ENCODE measurements at regions of chr6 and their contacts with region 1.

Region 1: DNA sequence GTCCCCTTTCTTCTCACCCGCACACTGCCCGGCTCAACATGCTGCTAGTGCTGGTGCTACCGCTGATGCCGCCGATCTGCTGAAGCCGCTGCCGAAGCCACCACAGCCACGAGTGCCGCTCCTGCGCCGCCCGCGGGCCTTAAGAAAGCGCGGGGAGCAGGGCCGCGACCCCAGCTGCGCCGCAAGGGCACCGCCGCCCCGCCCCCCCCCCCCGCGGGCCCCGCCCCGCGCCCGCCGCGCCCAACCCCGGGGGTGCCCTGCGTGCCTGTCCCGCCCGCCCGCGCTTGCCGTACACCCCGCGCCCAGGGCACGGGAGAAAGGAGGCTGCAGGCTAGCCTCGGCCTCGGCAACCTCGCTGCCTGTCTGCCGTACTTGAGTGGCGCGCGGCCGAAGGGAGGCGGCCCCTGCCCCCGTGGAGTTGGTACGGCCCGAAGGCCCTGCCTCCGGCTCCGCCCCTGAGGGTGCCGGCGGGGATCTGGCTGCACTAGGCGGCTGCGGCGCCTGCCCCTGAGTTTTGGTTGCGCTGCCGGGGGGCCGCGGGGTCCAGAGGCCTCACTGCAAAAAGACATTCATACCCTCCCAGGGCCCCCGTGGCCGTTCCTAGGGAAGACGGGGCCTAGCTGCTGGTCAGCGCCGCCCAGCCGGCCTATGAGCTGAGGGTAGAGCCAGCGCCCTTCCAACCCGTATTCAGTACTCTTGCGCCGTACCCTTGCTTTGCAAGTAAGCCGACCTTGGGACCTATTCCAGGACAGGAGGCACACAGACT is at the start of gene SOD2:
- DNase-seq: peak; percentile 90
- ATAC-seq: peak; percentile 75
- H3K4me3 Mint-ChIP-seq: peak within 1 kb of the TSS; percentile 92
- H3K27ac Mint-ChIP-seq: peak within 1 kb of the TSS; percentile 93
- H3K4me1 Mint-ChIP-seq: peaks cover 44% of the 10 kb centered on the region
- H3K27me3 Mint-ChIP-seq: no peaks in the 10 kb centered on the region
- total RNA-seq, gene SOD2: 90.6 to 105 TPM

Region 2: GRCh38 chr6:158853072-158853871 is 840.0 kb before region 1 on chr6:
- CTCF ChIA-PET with region 1: no interaction called
- POLR2A ChIA-PET with region 1: no interaction called
- intact Hi-C with region 1: loop called in 1 of 2 experiments (anchors 10 kb)
- DNase-seq: peak; percentile 94
- ATAC-seq: peak; percentile 83
- H3K4me3 Mint-ChIP-seq: no peak overlapping the region
- H3K27ac Mint-ChIP-seq: no peak overlapping the region
- H3K4me1 Mint-ChIP-seq: peaks cover 29% of the 10 kb centered on the region
- H3K27me3 Mint-ChIP-seq: no peaks in the 10 kb centered on the region

Region 3: GRCh38 chr6:158910484-158911348 is 782.6 kb before region 1 on chr6:
- CTCF ChIA-PET with region 1: no interaction called
- POLR2A ChIA-PET with region 1: no interaction called
- intact Hi-C with region 1: no loop called
- DNase-seq: peak; percentile 16
- ATAC-seq: peak; percentile 40
- H3K4me3 Mint-ChIP-seq: peak overlapping the region; percentile 25
- H3K27ac Mint-ChIP-seq: peak overlapping the region; percentile 43
- H3K4me1 Mint-ChIP-seq: peaks cover 29% of the 10 kb centered on the region
- H3K27me3 Mint-ChIP-seq: no peaks in the 10 kb centered on the region

Region 4: GRCh38 chr6:159473475-159474263 is 219.6 kb before region 1 on chr6:
- CTCF ChIA-PET with region 1: no interaction called
- POLR2A ChIA-PET with region 1: no interaction called
- intact Hi-C with region 1: no loop called
- DNase-seq: no peak
- ATAC-seq: no peak
- H3K4me3 Mint-ChIP-seq: no peak overlapping the region
- H3K27ac Mint-ChIP-seq: no peak overlapping the region
- H3K4me1 Mint-ChIP-seq: no peaks in the 10 kb centered on the region
- H3K27me3 Mint-ChIP-seq: peaks cover 6% of the 10 kb centered on the region

Region 5: DNA sequence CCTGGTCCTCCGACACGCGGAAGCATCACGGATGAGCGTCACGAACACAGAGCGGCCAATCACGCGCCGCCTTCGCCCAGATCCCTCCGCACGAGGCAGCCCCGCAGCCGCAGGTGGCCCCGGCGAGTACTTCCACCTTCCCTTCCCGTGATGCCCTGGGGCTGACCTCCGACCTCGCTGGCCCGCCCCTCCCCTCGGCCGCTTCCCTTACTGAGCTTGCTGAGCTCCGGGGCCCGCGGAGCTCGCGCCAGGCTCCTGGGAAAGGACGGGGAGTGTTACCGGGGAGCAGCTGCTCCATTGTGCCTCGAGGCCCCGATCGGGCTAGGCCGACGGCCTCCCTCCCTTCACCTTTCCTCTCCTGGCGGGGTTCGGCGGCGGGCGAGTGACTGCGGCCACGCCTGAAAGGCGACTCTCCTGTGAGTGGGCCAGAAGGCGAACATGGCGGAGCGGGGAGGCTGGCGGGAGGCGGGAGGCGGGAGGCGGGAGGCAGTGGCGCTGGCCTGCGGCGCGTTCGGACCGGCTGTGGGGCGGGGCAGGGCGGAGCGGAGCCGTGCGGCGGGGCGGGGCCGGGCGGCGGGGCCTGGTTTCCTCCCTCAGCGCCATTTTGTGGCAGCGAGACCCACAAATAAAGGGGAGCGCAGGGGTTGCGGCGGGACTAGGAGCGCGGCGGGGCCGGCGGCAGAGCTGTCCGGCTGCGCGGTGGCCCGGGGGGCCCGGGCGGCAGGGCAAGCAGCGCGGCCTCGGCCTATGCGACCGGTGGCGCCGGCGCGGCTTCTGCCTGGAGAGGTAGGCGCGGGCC is 33.8 kb after region 1 on chr6 and contains the start of gene WTAP:
- CTCF ChIA-PET with region 1: interaction called, 23 read pairs
- POLR2A ChIA-PET with region 1: interaction called, 23 read pairs
- intact Hi-C with region 1: loop called (anchors 1 kb)
- DNase-seq: peak; percentile 99
- ATAC-seq: peak; percentile 91
- H3K4me3 Mint-ChIP-seq: peak within 1 kb of the TSS; percentile 95
- H3K27ac Mint-ChIP-seq: peak within 1 kb of the TSS; percentile 98
- H3K4me1 Mint-ChIP-seq: peaks cover 47% of the 10 kb centered on the region
- H3K27me3 Mint-ChIP-seq: no peaks in the 10 kb centered on the region
- total RNA-seq, gene WTAP: 87.2 to 91.5 TPM

Region 6: GRCh38 chr6:159789377-159790148 is 96.3 kb after region 1 on chr6 and contains the start of gene TCP1:
- CTCF ChIA-PET with region 1: interaction called, 13 read pairs
- POLR2A ChIA-PET with region 1: interaction called, 15 read pairs
- intact Hi-C with region 1: loop called (anchors 1 to 2 kb)
- DNase-seq: peak; percentile 100
- ATAC-seq: peak; percentile 89
- H3K4me3 Mint-ChIP-seq: peak within 1 kb of the TSS; percentile 86
- H3K27ac Mint-ChIP-seq: peak within 1 kb of the TSS; percentile 99
- H3K4me1 Mint-ChIP-seq: peaks cover 62% of the 10 kb centered on the region
- H3K27me3 Mint-ChIP-seq: no peaks in the 10 kb centered on the region
- total RNA-seq, gene TCP1: 358 to 496 TPM

Region 7: GRCh38 chr6:159968440-159969203 is 275.3 kb after region 1 on chr6 and contains the start of gene IGF2R:
- CTCF ChIA-PET with region 1: interaction called, 6 read pairs
- POLR2A ChIA-PET with region 1: no interaction called
- intact Hi-C with region 1: loop called (anchors 1 to 5 kb)
- DNase-seq: peak; percentile 97
- ATAC-seq: peak; percentile 91
- H3K4me3 Mint-ChIP-seq: peak within 1 kb of the TSS; percentile 93
- H3K27ac Mint-ChIP-seq: peak within 1 kb of the TSS; percentile 92
- H3K4me1 Mint-ChIP-seq: peaks cover 38% of the 10 kb centered on the region
- H3K27me3 Mint-ChIP-seq: no peaks in the 10 kb centered on the region
- total RNA-seq, gene IGF2R: 55.6 to 65.6 TPM

Region 8: GRCh38 chr6:160221423-160221822 is 528.1 kb after region 1 on chr6:
- CTCF ChIA-PET with region 1: no interaction called
- POLR2A ChIA-PET with region 1: no interaction called
- intact Hi-C with region 1: loop called in 1 of 2 experiments (anchors 10 kb)
- DNase-seq: no peak
- ATAC-seq: peak; percentile 30
- H3K4me3 Mint-ChIP-seq: no peak overlapping the region
- H3K27ac Mint-ChIP-seq: no peak overlapping the region
- H3K4me1 Mint-ChIP-seq: peaks cover 10% of the 10 kb centered on the region
- H3K27me3 Mint-ChIP-seq: peaks cover 31% of the 10 kb centered on the region

Region 9: DNA sequence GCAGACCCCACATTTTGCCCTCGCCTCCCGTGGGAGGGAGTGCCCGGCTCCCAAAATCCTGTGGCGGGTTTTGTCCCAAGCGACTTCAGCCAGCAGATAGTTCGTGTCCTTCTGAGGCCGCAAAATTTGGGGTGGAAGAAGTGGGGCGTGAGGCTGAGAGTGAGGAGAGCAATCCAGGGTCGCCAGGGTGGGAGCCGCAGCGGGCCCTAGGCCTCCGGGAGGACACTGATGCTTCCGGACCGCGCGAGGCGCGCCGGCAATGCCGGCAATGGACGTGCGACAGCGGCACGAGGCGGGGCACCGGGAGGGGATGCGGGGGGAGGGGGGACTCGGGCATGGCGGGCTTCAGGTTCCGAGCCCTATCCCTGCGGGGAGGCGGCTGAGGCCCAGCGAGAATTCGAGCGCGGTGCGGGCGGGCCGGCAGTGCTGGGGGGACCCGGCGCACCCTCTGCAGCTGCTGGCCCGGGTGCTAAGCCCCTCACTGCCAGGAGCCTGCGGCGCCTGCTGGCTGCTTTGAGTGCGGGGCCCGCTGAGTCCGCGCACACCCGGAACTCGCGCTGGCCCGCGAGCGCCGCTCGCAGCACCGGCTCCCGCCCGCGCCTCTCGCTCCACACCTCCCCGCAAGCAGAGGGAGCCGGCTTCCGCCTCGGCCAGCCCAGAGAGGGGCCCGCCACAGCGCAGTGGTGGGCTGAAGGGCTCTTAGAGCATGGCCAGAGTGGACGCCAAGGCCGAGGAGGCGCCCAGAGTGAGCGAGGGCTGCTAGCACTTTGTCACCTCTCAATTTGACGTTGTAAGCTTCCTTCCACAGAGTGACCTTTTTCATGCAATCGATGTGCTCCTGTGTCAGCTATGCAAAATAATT is 827.0 kb after region 1 on chr6:
- CTCF ChIA-PET with region 1: no interaction called
- POLR2A ChIA-PET with region 1: no interaction called
- intact Hi-C with region 1: loop called (anchors 10 kb)
- DNase-seq: peak; percentile 83
- ATAC-seq: peak; percentile 76
- H3K4me3 Mint-ChIP-seq: peak overlapping the region; percentile 79
- H3K27ac Mint-ChIP-seq: peak overlapping the region; percentile 80
- H3K4me1 Mint-ChIP-seq: peaks cover 25% of the 10 kb centered on the region
- H3K27me3 Mint-ChIP-seq: peaks cover 5% of the 10 kb centered on the region

Measured in activated CD4-positive, alpha-beta T cell treated with anti-CD3 and anti-CD28 coated beads for 36 hours (primary cell).